ENCODE measurements at regions of chr1 and their contacts with region 1.

Region 1: DNA sequence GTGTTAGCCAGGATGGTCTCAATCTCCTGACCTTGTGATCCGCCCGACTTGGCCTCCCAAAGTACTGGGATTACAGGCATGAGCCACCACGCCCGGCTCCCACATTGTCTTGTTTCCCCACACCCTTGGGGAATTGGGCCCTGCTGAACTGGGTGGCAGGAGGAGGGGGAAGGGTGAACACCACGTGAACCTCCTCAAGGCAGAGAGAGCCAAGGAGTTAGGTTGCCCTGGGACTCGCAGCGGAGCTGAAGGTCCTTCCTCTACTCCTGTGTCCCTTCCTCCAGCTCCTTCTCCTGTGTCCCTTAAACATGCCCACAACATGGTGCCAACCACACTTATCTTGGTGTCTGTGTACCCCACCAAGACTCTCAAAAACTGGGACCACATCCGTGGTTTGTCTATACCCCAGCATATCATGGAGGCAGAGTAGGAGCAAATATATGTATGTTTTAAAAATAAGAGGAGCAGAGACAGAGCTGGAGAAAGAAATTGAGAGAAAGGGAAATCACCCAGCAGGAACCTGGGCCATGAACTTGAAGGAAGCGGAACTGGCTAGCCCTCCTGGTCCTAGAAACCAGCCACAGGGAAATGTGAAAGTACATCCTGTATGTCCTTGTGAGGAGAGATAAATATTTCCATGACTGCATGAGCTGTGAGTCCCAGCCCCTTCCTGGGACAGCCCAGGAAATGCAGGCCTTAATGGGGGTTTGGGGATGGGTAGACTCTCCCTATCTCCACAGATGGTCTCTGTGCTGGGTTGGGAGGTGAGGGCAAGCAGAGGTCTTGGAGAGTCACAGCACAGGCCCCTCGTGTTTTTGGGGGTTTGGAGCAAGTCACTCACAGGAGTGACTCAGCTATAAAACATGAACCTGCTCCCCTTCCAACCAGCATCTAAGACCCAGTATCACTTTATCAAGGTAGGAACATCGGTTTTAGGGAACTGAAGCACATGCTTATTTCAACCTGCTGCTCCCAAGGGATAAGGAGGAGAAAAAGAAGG is 9.4 kb upstream of the TAL1 start:
- DNase-seq: no peak
- H3K4me3 ChIP-seq: no peak overlapping the region
- H3K27ac ChIP-seq: peak overlapping the region in 1 of 2 donors; percentile 66
- H3K4me1 ChIP-seq: no peaks in the 10 kb centered on the region
- H3K27me3 ChIP-seq: peaks cover 0 to 20% of the 10 kb centered on the region in 2 donors
- CTCF ChIP-seq: no peak
- POLR2A ChIP-seq: no peak

Region 2: GRCh38 chr1:47192458-47193384 is 48.7 kb before region 1 on chr1:
- intact Hi-C with region 1: loop called (anchors 10 kb)
- DNase-seq: peak; percentile 56 to 70
- H3K4me3 ChIP-seq: no peak overlapping the region
- H3K27ac ChIP-seq: peak overlapping the region in 1 of 2 donors; percentile 36
- H3K4me1 ChIP-seq: peaks cover 7% of the 10 kb centered on the region in 2 donors
- H3K27me3 ChIP-seq: no peaks in the 10 kb centered on the region
- CTCF ChIP-seq: peak; percentile 44 to 89 (median 79)
- POLR2A ChIP-seq: no peak

Region 3: GRCh38 chr1:48823168-48823567 is 1581.8 kb after region 1 on chr1:
- intact Hi-C with region 1: no loop called
- DNase-seq: no peak
- H3K4me3 ChIP-seq: no peak overlapping the region
- H3K27ac ChIP-seq: no peak overlapping the region
- H3K4me1 ChIP-seq: no peaks in the 10 kb centered on the region
- H3K27me3 ChIP-seq: no peaks in the 10 kb centered on the region
- CTCF ChIP-seq: no peak
- POLR2A ChIP-seq: no peak

Measured in breast epithelium (tissue), 4 donors.